Adrenal gland (tissue), 19 donors: ENCODE measurements at regions of chr21 and their contacts with region 1.

Region 1: DNA sequence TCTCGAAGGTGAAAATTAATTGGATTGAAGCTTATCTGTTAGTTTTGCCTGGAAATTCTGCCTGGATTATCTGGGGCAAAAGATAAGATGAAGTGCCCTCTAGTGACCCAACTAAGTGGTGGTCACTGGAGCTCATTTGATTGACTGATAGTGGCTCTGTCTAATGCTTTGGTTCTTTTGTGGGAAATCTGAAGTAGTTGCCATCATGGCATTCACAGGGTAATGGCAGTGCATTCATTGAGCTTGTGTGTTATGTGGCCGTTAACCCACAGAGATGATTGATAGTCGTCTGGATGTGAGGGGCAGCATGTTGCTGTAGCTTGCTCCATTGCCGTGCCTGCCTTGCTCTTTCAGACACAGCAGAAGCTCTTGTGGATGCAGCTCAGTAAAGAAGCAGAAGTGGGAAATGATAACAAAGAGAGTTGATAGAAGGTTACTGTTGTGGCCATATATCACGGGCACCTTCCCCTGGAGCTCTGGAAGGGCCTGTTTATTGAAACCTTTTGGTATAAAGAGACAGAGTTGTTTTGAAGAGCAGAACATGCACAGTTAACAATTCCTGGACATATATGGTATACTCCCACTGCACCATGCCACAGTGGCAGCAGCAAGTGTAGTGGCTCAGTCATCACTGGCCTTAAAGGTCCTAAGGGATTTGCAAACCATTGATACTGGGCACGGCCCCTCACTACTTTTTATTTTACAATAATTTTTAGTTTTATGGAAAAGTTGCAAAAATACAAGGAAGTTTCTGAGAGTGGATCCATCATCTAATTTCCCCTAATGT is 42.0 kb downstream of the CXADR start:
- DNase-seq: peak in 1 of 7 donors; percentile 8
- H3K4me3 ChIP-seq: no peak overlapping the region
- H3K27ac ChIP-seq: no peak overlapping the region
- H3K4me1 ChIP-seq: no peaks in the 10 kb centered on the region
- H3K27me3 ChIP-seq: no peaks in the 10 kb centered on the region
- CTCF ChIP-seq: peak in 5 of 6 experiments; percentile 2 to 44 (median 31)
- POLR2A ChIP-seq: no peak

Region 2: GRCh38 chr21:17387030-17387617 is 167.7 kb before region 1 on chr21:
- intact Hi-C with region 1: loop called in 1 of 2 experiments (anchors 10 kb)
- DNase-seq: peak in 6 of 7 donors; percentile 26 to 68 (median 58)
- H3K4me3 ChIP-seq: no peak overlapping the region
- H3K27ac ChIP-seq: no peak overlapping the region
- H3K4me1 ChIP-seq: no peaks in the 10 kb centered on the region
- H3K27me3 ChIP-seq: no peaks in the 10 kb centered on the region
- CTCF ChIP-seq: peak; percentile 74 to 96 (median 84)
- POLR2A ChIP-seq: no peak